ENCODE measurements at regions of chr17 and their contacts with region 1.

Region 1: DNA sequence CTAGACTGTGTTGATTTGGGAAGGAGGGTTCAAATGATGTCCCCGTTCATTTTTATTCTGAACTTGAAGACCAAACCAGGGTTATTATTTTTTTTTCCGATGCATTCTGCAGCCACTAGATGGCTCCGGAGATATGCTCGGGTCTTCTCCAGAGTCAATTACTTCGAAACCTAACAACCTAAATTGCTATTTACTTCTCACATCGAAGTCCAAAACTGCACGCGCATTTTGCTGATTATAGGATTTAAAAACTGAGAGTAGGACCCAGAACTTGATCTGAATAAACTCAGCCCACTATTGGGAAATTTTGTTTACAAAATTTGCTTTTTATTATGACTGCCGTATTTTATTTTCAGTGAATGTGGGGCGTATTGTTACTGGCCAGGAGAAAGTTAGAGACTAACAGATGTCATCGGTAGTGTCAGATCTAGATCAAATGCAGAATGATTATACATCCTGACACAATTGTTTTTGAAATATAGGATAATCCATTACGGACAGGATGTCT is 263.8 kb downstream of the HS3ST3A1 start:
- H3K4me3 ChIP-seq: no peak overlapping the region
- H3K27ac ChIP-seq: no peak overlapping the region
- H3K4me1 ChIP-seq: no peaks in the 10 kb centered on the region; the same call in 1 of the 2 replicates
- CTCF ChIP-seq: peak; percentile 57; the same call in 1 of the 2 replicates

Region 2: DNA sequence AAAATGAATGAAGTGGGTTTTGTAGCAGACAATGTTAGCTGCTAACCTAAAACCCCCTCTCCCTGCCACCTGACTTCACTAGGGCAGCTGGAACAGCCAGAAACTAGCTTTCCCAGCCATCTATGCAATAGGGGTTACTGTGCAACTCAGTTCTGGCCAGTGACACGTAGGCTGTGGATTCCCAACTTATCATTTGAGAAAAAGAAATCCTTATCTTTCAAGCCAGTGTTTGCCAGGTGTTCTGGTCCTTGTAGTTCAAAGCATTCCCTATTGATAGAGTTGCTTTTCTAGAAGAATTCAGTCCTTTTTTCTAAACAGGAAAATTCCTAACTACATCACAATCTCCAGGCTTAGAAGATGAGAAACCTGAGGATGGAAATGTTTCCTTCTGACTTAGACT is 175.6 kb before region 1 on chr17:
- CTCF ChIA-PET with region 1: no interaction called
- POLR2A ChIA-PET with region 1: no interaction called
- H3K4me3 ChIP-seq: no peak overlapping the region
- H3K27ac ChIP-seq: no peak overlapping the region
- H3K4me1 ChIP-seq: no peaks in the 10 kb centered on the region
- CTCF ChIP-seq: no peak

Region 3: DNA sequence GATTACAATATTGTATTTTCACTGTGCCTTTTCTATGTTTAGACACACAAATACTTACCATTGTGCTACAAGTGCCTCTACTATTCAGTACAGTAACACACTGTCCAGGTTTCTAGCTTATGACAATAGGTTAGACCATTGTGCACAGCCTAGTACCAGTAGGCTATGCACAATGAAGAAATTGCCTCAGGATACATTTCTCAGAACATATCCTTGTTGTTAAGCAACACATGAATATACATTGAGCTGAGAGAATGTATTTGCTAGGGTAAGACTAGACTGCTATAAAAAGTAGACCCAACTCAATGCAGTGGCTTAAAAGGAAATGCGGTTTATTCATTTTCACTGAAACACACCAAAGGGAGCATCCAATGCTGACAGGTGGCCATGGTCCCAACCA is 21.3 kb before region 1 on chr17:
- CTCF ChIA-PET with region 1: no interaction called
- POLR2A ChIA-PET with region 1: no interaction called
- H3K4me3 ChIP-seq: no peak overlapping the region
- H3K27ac ChIP-seq: no peak overlapping the region
- H3K4me1 ChIP-seq: no peaks in the 10 kb centered on the region
- CTCF ChIP-seq: no peak

Region 4: DNA sequence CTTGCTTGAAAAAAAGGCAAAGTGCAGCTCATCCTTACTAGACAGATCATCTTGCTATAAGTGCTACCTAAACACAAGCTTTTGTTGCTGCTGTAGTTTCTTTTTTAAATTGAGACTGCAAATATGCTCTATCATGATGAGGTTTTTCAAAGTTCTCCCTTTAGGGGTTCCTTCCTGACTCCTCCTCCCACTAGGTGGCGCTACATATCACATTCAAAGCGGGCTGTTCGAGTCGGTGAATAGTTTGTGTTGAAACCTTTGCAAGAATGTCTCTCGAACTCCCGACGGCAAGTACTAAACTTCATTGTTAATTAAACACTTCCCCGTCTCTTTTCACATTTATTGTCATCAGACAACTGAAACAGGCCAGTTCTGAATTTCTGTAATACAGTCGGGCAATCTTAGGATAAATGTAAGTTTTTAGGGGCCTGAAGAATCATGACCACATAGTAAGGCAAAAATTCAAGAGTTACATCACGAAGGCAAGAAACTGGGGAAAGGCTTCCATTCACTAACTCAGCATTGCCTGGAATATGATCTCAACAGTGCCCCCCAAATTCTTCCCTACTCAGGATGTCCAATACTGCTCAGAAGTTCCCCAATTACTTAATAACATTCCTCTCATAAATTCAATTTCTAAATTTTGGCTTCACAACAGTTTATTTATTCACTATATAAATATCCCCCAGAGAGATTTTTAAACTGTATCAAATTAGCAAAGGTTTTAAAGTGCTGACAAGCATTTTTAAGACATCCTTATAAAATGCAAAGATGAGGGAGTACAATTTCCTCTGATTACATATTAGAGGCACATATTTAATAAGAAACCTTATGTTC is 257.1 kb after region 1 on chr17:
- CTCF ChIA-PET with region 1: interaction called, 21 read pairs
- POLR2A ChIA-PET with region 1: no interaction called
- H3K4me3 ChIP-seq: no peak overlapping the region
- H3K27ac ChIP-seq: no peak overlapping the region
- H3K4me1 ChIP-seq: peaks cover 29% of the 10 kb centered on the region
- CTCF ChIP-seq: 0 out of 2 replicates have a peak, but pooled peaks have one; percentile 28